Activated T-helper 2 cell treated with anti-CD3 and anti-CD28 coated beads, Interferon-gamma antibody, Interleukin-2, Interleukin-4, amounts not matched to agents 10 μg/mL and 5 μg/mL and 100 μg/mL, durations not matched to agents 14 hours and 24 hours and 36 hours (primary cell): ENCODE measurements at regions of chr14 and their contacts with region 1.

Region 1: DNA sequence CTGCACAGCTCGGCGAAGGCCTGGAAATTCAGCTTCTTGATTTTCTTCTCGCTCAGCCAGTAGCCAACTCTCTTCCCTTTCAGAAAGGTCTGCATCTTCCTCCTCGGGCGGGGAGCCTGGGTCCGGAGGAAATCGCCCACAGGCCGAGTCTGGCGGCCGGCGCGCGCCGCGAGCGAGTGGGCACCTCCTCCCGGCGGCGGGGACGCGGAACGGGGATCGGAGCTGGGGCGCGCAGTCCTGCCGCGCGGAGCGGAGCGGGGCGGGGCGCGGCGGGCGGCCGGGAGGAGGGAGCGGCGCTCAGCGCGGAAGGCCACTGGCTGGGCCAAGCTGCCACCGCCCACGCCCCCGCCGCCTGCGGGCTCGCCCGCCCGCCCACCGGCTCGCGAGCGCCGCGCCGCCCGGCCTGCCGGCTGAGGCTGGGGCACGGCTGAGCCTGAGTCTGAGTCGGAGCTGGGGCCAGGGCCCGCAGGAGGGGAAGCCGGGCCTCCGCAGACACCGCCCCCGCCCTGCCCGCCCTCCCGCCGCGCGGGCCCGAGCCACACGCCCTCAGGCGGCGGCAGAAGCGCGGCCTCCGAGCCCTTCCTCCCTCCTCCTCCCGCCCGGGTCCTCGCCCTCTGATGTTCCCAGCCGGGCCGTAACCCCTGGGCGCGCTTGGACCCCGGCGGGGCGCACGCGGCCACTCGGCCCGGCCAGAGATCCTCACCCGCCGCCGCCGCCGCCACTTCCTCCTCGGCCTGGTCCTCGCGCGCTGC is 480 bp downstream of the ITPK1 start:
- DNase-seq: peak; percentile 87
- H3K4me3 Mint-ChIP-seq: peak overlapping the region; percentile 89
- H3K27ac Mint-ChIP-seq: peak overlapping the region; percentile 72
- H3K4me1 Mint-ChIP-seq: peaks cover 23% of the 10 kb centered on the region
- H3K27me3 Mint-ChIP-seq: no peaks in the 10 kb centered on the region

Region 2: DNA sequence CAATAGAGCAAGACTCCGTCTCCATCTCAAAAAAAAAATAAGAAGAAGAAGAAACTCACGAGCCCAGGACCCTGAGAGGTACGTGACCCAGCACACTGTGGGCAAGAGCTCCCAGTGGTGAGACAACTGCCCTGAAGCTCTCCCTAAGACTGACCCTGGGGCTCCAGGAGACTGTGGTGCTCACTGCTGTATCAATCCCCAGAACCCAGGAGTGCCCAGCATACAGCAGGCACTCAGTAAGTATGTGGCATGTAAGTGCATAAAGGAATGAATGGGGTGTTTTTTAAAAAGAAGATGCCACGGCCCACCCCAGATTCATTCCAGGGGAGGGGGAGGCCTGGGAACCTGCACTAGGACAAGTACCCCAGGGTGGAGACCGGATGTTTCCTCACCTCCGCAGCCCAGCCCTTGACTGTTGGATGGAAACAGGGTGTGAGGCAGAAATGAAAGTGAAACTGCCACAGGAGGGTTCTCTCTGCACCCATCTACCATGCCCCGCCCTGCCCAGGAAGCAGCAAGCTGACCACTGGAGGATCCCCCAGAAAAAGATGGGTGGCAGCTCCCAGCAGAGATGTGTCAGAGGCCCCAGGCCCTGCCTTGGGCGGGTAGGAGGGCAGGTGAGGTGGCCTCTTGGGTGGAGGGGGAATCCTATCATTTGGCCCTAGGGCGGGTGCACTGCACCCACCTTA is 11.7 kb before region 1 on chr14:
- intact Hi-C with region 1: loop called (anchors 1 kb)
- DNase-seq: peak; percentile 83
- H3K4me3 Mint-ChIP-seq: peak overlapping the region; percentile 67
- H3K27ac Mint-ChIP-seq: peak overlapping the region; percentile 92
- H3K4me1 Mint-ChIP-seq: peaks cover 37% of the 10 kb centered on the region
- H3K27me3 Mint-ChIP-seq: no peaks in the 10 kb centered on the region

Region 3: DNA sequence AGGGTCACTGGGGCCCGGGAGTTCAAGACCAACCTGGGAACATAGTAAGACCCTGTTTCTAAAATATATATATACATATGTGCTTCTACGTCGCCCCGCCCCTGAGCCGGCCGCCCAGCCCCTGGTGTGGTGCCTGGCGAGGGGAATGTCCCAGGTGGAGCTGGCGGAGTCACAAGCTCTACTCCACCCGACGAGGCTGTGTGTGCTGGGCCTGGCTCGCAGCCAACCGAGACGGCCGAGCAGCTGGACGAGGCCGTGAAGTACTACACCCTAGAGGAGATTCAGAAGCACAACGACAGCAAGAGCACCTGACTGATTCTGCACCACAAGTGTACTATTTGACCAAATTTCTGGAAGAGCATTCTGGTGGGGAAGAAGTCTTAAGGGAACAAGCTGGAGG is 22.6 kb after region 1 on chr14:
- intact Hi-C with region 1: loop called (anchors 1 kb)
- DNase-seq: no peak
- H3K4me3 Mint-ChIP-seq: no peak overlapping the region
- H3K27ac Mint-ChIP-seq: no peak overlapping the region
- H3K4me1 Mint-ChIP-seq: peaks cover 2% of the 10 kb centered on the region
- H3K27me3 Mint-ChIP-seq: peaks cover 2% of the 10 kb centered on the region

Region 4: GRCh38 chr14:93184388-93185353 is 69.4 kb after region 1 on chr14 and contains the starts of genes LYSET and MOAP1:
- intact Hi-C with region 1: loop called (anchors 2 kb)
- DNase-seq: peak; percentile 88
- H3K4me3 Mint-ChIP-seq: peak within 1 kb of the TSS; percentile 93
- H3K27ac Mint-ChIP-seq: peak within 1 kb of the TSS; percentile 89
- H3K4me1 Mint-ChIP-seq: peaks cover 28% of the 10 kb centered on the region
- H3K27me3 Mint-ChIP-seq: no peaks in the 10 kb centered on the region
- total RNA-seq, gene LYSET: 12.2 and 13.4 TPM in 2 replicates
- total RNA-seq, gene MOAP1: 17.8 and 18.7 TPM in 2 replicates

Region 5: GRCh38 chr14:93219103-93219726 is 104.0 kb after region 1 on chr14:
- intact Hi-C with region 1: loop called (anchors 1 kb)
- DNase-seq: no peak
- H3K4me3 Mint-ChIP-seq: no peak overlapping the region
- H3K27ac Mint-ChIP-seq: no peak overlapping the region
- H3K4me1 Mint-ChIP-seq: no peaks in the 10 kb centered on the region
- H3K27me3 Mint-ChIP-seq: no peaks in the 10 kb centered on the region

Region 6: DNA sequence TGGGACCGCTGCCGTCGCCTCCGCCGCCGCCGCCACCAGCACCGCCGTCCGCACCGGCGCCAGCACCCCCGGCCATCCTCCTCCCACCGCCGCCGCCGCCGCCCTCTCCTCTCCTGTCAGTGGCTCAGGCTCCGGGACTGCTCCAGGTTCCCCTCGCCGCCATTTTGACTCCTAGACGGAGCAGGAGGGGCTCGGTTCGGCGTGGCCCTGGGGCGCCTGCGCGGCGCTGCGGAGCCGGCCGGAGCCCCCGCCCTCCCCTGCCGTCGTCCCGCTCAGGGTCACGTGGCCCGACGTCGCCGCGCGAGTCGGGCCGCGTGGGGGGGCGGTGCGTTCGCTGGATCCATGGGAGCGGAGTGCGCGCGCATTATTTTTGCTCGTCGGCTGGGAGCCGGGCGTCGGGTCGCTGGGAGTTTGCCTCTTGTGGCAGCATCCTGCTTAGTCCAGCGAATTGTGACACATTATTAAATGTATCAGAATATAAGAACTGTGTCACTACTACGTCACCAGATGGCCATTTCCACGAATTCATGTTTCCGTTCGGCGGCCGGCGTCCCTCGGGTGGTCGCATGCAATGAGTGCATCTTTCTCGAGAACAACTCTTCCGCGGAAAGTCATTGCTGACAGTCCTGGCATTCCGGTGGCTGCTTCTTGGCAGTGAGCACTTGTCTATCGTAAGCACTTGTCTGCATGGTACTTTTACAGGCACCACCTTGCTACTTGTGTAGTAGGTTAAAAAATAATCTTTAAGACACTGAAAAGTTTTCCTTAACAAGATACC is 217.8 kb after region 1 on chr14 and contains the start of gene BTBD7:
- intact Hi-C with region 1: loop called (anchors 10 kb)
- DNase-seq: peak; percentile 92
- H3K4me3 Mint-ChIP-seq: peak within 1 kb of the TSS; percentile 89
- H3K27ac Mint-ChIP-seq: peak within 1 kb of the TSS; percentile 92
- H3K4me1 Mint-ChIP-seq: peaks cover 30% of the 10 kb centered on the region
- H3K27me3 Mint-ChIP-seq: no peaks in the 10 kb centered on the region
- total RNA-seq, gene BTBD7: 16.5 and 17.9 TPM in 2 replicates

Region 7: DNA sequence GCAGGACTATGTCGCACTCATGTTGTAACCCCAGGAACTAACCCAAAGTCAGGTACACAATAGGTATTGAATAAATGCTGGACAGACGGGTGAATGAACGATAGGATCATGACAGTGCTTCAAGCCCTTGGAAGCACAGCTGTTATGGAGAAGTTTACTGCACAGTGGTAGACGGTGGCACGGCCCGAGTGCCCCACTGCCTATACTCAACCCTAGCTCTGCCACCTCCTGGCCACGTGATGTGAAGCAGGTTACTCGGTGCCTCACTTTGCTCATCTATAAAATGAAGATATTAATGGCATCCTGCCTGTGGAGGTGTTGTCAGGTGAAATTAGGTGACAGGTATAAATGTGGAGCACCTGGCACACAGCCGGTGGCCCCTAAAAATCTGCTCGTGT is 855.3 kb after region 1 on chr14:
- intact Hi-C with region 1: loop called (anchors 10 kb)
- DNase-seq: peak; percentile 43
- H3K4me3 Mint-ChIP-seq: peak overlapping the region; percentile 85
- H3K27ac Mint-ChIP-seq: peak overlapping the region; percentile 99
- H3K4me1 Mint-ChIP-seq: peaks cover 89% of the 10 kb centered on the region
- H3K27me3 Mint-ChIP-seq: no peaks in the 10 kb centered on the region